ENCODE measurements at regions of chr16 and their contacts with region 1.

Region 1: GRCh38 chr16:31073968-31074813 is at the starts of genes ZNF646 and ZNF668:
- DNase-seq: peak; percentile 91 to 99
- H3K4me3 ChIP-seq: peak within 1 kb of the TSS; percentile 73 to 87
- H3K27ac ChIP-seq: peak within 1 kb of the TSS; percentile 87 to 91
- H3K4me1 ChIP-seq: peaks cover 0 to 20% of the 10 kb centered on the region in 2 donors
- H3K27me3 ChIP-seq: no peaks in the 10 kb centered on the region
- CTCF ChIP-seq: no peak
- total RNA-seq, gene ZNF646: 11.6 TPM
- total RNA-seq, gene ZNF668: 12.2 TPM

Region 2: GRCh38 chr16:30041846-30042267 is 1032.3 kb before region 1 on chr16:
- intact Hi-C with region 1: no loop called
- DNase-seq: no peak
- H3K4me3 ChIP-seq: no peak overlapping the region
- H3K27ac ChIP-seq: no peak overlapping the region
- H3K4me1 ChIP-seq: no peaks in the 10 kb centered on the region
- H3K27me3 ChIP-seq: no peaks in the 10 kb centered on the region
- CTCF ChIP-seq: peak in 2 of 3 experiments; percentile 33 to 51

Region 3: GRCh38 chr16:30758988-30759521 is 315.1 kb before region 1 on chr16:
- intact Hi-C with region 1: no loop called
- DNase-seq: no peak
- H3K4me3 ChIP-seq: no peak overlapping the region
- H3K27ac ChIP-seq: no peak overlapping the region
- H3K4me1 ChIP-seq: peaks cover 16 to 18% of the 10 kb centered on the region in 2 donors
- H3K27me3 ChIP-seq: no peaks in the 10 kb centered on the region
- CTCF ChIP-seq: no peak

Region 4: GRCh38 chr16:30957456-30958174 is 116.6 kb before region 1 on chr16 and contains the start of gene SETD1A:
- intact Hi-C with region 1: loop called (anchors 1 kb)
- DNase-seq: peak; percentile 81 to 98
- H3K4me3 ChIP-seq: peak within 1 kb of the TSS; percentile 94 to 95
- H3K27ac ChIP-seq: peak within 1 kb of the TSS; percentile 98 to 99
- H3K4me1 ChIP-seq: peaks cover 3 to 22% of the 10 kb centered on the region in 2 donors
- H3K27me3 ChIP-seq: no peaks in the 10 kb centered on the region
- CTCF ChIP-seq: peak in 1 of 3 experiments; percentile 11
- total RNA-seq, gene SETD1A: 8.3 TPM

Region 5: DNA sequence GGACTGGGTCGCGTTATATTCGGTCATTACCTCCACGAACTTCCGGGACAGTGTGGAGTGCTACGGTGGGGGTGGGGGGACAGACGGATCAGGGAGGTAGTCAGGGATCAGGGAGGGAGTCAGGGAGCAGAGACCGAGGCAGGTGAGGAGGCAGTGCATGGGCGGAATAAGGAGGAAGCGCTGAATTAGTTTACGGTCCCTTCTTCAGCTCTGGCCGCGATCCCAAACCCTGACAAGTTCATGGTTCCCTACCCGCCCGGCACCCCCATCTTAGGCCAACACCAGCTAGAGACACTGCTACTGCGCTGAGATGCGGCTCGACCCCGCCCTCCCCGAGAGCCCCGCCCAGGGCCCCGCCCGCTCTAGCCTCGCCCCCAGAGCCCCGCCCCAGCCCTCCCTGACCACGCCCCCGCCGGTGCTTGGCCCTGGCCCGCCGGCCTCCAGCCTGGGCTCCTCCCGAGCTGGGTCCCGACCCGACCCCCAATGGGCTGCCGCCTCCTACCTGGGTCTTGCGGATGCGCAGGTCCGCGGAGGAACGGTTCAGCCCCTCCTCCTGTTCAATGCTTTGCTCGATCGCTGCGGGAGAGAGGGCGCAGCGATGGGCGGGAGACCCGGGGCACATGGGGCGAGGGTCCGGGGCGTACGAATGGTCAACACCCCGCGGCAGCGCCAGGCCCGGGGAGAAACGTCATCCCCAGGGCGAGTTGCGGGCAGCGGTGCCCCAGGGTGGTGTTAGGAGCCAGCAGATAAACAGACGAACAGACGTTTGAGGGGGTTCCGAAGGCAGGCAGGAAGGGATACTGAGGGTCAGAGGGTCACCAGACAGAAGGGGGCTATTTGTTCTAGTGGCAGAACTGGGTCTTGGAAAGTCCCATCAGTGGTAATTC is 76.9 kb before region 1 on chr16:
- intact Hi-C with region 1: loop called (anchors 2 kb)
- DNase-seq: peak in 1 of 2 donors; percentile 90
- H3K4me3 ChIP-seq: peak overlapping the region; percentile 65 to 78
- H3K27ac ChIP-seq: peak overlapping the region; percentile 90 to 94
- H3K4me1 ChIP-seq: peaks cover 9 to 27% of the 10 kb centered on the region in 2 donors
- H3K27me3 ChIP-seq: no peaks in the 10 kb centered on the region
- CTCF ChIP-seq: no peak

Region 6: DNA sequence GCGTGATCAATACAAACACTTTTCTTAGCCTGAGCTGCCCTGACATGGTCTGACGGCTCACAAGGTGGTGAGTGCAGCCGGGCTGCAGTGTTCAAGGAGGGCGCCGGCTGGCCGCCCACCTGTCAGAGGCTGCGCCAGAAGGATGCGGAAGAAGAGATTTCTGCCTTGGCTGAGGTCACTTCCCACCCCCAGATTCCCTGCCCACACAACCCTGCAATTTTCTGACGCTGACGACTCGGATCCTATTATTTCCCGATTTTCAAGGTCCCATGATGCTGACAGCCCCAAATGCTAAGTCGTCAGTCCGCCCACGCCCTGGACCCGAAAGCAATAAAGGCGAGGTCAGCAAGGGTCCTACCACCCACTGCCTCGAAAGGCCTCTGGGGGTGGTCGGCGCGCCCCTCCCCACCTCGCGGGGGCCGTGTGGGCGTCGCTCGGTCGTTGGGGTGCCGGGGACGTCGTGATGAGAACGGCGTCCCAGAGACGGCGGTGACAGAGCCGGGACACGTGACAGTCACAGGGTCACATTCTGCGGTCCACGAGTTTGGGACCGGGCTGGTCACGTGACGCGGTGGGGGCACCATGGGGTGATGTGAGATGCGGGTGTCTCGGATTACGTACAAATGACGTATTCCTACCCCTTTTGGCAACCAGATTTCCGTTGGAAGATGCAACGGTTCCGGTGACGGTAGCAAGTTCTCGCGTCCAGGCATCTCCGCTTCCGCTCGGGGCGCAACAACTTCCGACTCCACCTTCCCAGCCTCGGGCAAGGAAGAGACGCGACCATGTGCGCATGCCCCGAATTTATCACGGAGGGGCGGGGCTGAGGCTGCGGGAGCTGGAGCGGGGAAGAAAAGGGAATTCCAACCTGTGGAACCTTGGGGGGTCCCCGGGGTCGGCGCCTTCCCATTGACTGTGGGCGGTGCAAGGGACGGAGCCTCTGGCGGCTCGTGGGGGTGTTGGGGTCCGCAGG is 41.2 kb before region 1 on chr16 and contains the start of gene STX4:
- intact Hi-C with region 1: loop called (anchors 1 kb)
- DNase-seq: peak; percentile 88 to 99
- H3K4me3 ChIP-seq: peak within 1 kb of the TSS; percentile 83 to 99
- H3K27ac ChIP-seq: peak within 1 kb of the TSS; percentile 92 to 99
- H3K4me1 ChIP-seq: peaks cover 3 to 10% of the 10 kb centered on the region in 2 donors
- H3K27me3 ChIP-seq: no peaks in the 10 kb centered on the region
- CTCF ChIP-seq: no peak
- total RNA-seq, gene STX4: 79.1 TPM

Region 7: DNA sequence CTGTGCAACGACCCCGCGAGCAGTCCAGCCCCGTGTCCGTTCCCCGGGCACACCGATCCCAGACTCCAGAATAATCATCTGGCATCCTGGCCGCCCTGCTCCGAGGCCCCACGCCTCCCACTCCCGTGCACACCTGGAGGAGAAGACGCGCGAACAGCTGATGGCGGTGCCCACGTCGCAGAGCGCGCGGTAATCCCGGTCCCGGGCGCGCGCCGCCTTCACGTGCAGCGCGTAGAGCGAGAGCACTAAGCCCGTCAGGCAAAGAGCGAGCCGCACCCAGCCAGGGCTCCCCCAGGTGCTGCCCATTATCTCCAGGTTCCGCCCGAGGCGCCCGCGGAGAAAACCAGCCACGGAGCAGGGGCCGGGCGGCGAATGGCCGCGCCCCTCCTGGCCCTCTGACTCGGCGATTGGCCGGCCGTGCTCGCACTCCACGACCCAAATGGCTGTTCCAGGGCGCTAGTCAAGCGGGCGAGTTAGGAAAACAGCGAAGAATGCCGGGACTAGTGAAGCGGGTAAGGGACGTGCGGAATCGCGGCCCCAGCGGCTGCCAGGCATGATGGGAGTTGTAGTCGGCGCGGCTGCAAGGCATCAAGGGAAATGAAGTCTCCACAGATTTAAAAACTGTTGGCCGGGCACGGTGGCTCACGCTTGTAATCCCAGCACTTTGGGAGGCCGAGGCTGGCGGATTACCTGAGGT is 20.4 kb after region 1 on chr16 and contains the start of gene VKORC1:
- intact Hi-C with region 1: loop called (anchors 1 kb)
- DNase-seq: peak; percentile 88 to 98
- H3K4me3 ChIP-seq: peak within 1 kb of the TSS; percentile 94 to 97
- H3K27ac ChIP-seq: peak within 1 kb of the TSS; percentile 86 to 92
- H3K4me1 ChIP-seq: peaks cover 0 to 3% of the 10 kb centered on the region in 2 donors
- H3K27me3 ChIP-seq: no peaks in the 10 kb centered on the region
- CTCF ChIP-seq: no peak
- total RNA-seq, gene VKORC1: 227 TPM

Region 8: DNA sequence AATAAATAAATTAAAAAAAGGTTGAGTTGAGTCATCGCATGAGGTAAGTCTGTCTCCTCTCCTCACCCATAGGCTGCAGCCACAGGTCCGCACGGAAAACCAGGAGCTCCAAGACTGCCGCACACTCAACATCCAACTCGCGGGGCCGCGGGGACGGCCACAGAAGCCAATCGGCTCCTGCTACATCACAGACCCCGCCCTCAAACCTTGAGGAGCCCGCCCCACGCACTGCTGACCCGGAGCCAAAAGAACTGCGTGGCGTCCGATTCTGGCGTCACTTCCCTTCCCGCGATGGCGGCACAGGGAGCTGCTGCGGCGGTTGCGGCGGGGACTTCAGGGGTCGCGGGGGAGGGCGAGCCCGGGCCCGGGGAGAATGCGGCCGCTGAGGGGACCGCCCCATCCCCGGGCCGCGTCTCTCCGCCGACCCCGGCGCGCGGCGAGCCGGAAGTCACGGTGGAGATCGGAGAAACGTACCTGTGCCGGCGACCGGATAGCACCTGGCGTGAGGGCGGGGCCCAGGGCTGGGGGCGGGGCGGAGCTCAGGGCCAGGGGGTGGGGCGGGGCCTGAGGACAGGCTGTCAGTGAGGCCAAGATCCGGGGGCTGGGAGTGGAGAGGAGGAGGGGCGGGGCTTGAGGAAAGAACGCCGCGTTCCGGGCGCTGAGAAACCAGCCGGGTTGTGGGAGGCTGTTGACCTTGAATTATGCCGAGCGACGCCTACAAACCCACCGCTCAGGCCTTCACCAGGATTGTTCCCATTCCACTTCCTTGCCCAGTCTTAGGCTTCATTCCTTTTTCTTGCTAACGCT is 43.4 kb after region 1 on chr16 and contains the start of gene KAT8:
- intact Hi-C with region 1: loop called (anchors 1 kb)
- DNase-seq: peak; percentile 97 to 99
- H3K4me3 ChIP-seq: peak within 1 kb of the TSS; percentile 81 to 88
- H3K27ac ChIP-seq: peak within 1 kb of the TSS; percentile 97
- H3K4me1 ChIP-seq: peaks cover 0 to 13% of the 10 kb centered on the region in 2 donors
- H3K27me3 ChIP-seq: no peaks in the 10 kb centered on the region
- CTCF ChIP-seq: no peak
- total RNA-seq, gene KAT8: 113 TPM

Region 9: DNA sequence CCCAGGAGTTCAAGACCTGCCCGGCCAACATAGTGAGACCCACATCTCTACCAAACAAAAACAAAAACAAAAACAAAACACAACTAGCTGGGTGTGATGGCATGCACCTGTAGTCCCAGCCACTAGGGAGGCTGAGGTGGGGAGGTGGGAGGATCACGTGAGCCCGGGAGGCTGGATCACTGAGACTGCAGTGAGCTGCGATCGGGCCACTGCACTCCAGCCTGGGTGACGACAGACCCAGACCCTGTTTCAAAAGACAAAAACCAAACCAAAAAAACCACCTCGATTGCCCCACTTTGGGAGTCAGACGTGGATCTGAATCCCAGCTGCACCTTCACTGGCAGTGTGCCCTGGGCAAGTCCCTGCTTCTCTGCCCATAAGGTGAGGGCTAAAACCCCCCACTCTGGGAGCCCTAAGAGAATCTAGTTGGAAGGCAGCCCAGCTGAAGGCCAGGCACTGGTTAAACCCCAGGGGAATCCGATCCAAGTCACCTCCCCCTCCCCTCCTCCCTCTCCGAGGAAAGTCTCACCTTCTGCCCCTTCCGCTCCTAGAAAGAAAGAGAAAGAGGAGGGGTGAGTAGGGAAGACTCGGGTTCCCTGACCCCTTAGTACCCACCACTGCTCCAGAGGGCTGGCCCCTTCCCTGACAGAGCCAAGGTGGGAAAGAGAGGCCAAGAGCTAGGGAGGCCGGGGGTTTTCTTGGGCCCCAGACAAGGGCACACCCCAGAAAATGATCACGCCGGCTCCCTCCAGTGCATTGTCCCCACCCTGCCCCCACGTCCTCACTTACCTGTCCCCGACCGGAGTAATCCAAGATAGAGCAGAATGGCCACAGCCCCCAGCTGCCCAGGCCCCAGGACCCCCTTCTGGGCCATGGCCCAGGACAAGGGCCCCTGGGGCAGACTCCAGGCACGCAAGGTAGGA is 60.7 kb after region 1 on chr16:
- intact Hi-C with region 1: no loop called
- DNase-seq: no peak
- H3K4me3 ChIP-seq: no peak overlapping the region
- H3K27ac ChIP-seq: no peak overlapping the region
- H3K4me1 ChIP-seq: peaks cover 0 to 10% of the 10 kb centered on the region in 2 donors
- H3K27me3 ChIP-seq: no peaks in the 10 kb centered on the region
- CTCF ChIP-seq: no peak

Region 10: GRCh38 chr16:31224092-31224955 is 150.1 kb after region 1 on chr16:
- intact Hi-C with region 1: no loop called
- DNase-seq: no peak
- H3K4me3 ChIP-seq: no peak overlapping the region
- H3K27ac ChIP-seq: no peak overlapping the region
- H3K4me1 ChIP-seq: no peaks in the 10 kb centered on the region
- H3K27me3 ChIP-seq: no peaks in the 10 kb centered on the region
- CTCF ChIP-seq: no peak

Region 11: DNA sequence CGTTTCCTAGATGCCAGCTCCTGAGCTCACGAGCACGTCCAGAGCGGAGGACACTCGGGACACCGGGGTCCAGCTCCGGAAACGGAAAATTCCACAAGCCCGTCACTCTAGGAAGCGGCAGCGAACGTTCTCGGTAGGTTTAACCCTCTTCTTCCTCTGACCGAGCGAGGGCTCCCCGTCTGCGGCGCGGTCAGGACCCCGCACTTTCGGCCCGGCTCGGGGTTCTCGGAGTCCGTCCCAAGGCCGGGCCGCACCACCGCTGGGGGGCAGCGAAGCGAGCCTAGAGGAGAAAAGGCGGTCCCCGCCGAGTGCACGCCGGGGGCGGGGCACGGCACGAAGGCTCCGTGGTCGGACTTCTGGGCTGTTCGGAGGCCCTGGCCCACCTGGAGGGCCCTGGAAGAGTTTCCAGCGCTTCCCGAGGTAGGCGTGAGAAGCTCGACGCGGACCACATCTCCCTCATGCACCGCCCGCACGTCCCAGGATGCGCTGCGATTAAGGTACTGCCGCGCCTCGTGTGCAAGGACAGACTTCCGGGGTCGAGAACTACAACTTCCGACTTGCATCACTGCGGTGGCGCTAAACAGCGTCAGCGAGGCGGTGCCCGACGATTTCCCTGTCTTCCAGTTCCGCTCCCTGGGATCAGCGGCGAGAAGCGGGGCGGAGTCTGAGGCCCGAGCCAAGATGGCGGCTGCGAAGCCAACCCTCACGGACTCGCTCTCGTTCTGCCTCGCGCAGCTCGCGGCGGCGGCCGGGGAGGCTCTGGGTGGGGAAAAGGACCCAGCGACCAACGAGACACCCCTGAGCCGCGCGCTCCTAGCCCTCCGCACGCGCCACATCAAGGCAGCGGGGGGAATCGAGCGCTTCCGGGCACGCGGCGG is 384.9 kb after region 1 on chr16 and contains the start of gene ARMC5:
- intact Hi-C with region 1: loop called (anchors 1 kb)
- DNase-seq: peak; percentile 86 to 98
- H3K4me3 ChIP-seq: peak within 1 kb of the TSS; percentile 75 to 84
- H3K27ac ChIP-seq: peak within 1 kb of the TSS; percentile 99 to 100
- H3K4me1 ChIP-seq: peaks cover 20 to 47% of the 10 kb centered on the region in 2 donors
- H3K27me3 ChIP-seq: no peaks in the 10 kb centered on the region
- CTCF ChIP-seq: peak; percentile 55 to 67 (median 64)
- total RNA-seq, gene ARMC5: 10.0 TPM

Measured in ascending aorta (tissue), 2 donors.